Endothelial cell of umbilical vein (primary cell): ENCODE measurements at regions of chr11 and their contacts with region 1.

Region 1: DNA sequence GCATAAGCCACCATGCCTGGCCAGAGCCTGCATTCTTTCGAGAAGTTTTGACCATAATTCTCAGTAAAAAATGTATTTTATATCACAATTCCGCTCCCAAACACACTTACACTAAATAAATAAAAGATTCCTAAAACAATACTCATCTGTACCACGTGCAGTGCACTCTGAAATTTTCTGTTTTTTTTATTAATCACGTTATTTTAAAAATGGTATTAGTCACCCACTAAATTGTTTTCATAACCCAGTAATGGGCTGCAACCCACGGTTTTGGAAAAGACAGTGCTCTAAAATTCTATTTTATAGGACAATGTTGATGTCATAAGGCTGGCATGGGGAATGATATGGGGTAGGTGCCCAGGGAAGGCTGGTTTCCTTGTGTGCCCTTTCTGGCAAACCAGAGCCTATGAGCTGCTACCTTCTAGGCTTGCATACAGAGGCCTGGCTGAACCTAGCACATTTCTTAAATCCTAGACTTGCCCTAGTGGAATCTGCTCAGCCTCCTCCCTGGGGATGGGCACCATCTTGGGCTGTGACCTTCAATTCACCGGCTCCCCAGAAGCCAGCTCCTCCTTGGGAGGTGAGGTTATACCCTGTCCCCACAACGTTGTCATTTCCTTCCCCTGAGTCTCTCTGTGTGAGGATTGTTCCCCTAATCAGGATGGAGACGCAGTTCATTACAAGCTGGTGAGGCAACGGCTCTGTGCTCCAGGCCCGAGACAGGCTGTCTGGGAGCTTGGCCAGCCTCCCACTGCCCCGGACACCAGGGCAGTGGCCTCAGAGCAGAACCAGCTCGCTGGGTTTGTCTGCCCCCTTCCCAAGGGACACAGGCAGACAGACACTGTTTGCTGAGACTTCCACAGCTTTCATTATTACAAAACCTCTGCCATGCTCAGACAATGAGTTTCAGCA is 116.5 kb upstream of the NAV2 start:
- DNase-seq: peak; percentile 91
- H3K4me3 ChIP-seq: no peak overlapping the region
- H3K27ac ChIP-seq: peak overlapping the region; percentile 95
- H3K4me1 ChIP-seq: peaks cover 34% of the 10 kb centered on the region
- H3K27me3 ChIP-seq: no peaks in the 10 kb centered on the region
- CTCF ChIP-seq: no peak
- POLR2A ChIP-seq: no peak

Region 2: GRCh38 chr11:19344751-19345518 is 251.2 kb before region 1 on chr11:
- CTCF ChIA-PET with region 1: no interaction called
- POLR2A ChIA-PET with region 1: no interaction called
- dilution Hi-C with region 1: no loop called
- intact Hi-C with region 1: no loop called
- DNase-seq: peak; percentile 43
- H3K4me3 ChIP-seq: peak overlapping the region in 2 of 3 experiments; percentile 32 to 58
- H3K27ac ChIP-seq: no peak overlapping the region
- H3K4me1 ChIP-seq: peaks cover 12% of the 10 kb centered on the region
- H3K27me3 ChIP-seq: peaks cover 23 to 36% of the 10 kb centered on the region in 2 experiments
- CTCF ChIP-seq: no peak
- POLR2A ChIP-seq: no peak

Region 3: GRCh38 chr11:19524161-19524671 is 71.9 kb before region 1 on chr11:
- CTCF ChIA-PET with region 1: no interaction called
- POLR2A ChIA-PET with region 1: no interaction called
- dilution Hi-C with region 1: no loop called
- intact Hi-C with region 1: no loop called
- DNase-seq: no peak
- H3K4me3 ChIP-seq: no peak overlapping the region
- H3K27ac ChIP-seq: no peak overlapping the region
- H3K4me1 ChIP-seq: no peaks in the 10 kb centered on the region
- H3K27me3 ChIP-seq: peaks cover 0 to 2% of the 10 kb centered on the region in 2 experiments
- CTCF ChIP-seq: no peak
- POLR2A ChIP-seq: no peak

Region 4: GRCh38 chr11:19577976-19578619 is 18.0 kb before region 1 on chr11:
- CTCF ChIA-PET with region 1: no interaction called
- POLR2A ChIA-PET with region 1: interaction called, 7 read pairs
- dilution Hi-C with region 1: no loop called
- intact Hi-C with region 1: loop called (anchors 1 kb)
- DNase-seq: peak; percentile 86
- H3K4me3 ChIP-seq: peak overlapping the region in 1 of 3 experiments; percentile 25
- H3K27ac ChIP-seq: peak overlapping the region; percentile 78
- H3K4me1 ChIP-seq: peaks cover 25% of the 10 kb centered on the region
- H3K27me3 ChIP-seq: no peaks in the 10 kb centered on the region
- CTCF ChIP-seq: no peak
- POLR2A ChIP-seq: no peak

Region 5: DNA sequence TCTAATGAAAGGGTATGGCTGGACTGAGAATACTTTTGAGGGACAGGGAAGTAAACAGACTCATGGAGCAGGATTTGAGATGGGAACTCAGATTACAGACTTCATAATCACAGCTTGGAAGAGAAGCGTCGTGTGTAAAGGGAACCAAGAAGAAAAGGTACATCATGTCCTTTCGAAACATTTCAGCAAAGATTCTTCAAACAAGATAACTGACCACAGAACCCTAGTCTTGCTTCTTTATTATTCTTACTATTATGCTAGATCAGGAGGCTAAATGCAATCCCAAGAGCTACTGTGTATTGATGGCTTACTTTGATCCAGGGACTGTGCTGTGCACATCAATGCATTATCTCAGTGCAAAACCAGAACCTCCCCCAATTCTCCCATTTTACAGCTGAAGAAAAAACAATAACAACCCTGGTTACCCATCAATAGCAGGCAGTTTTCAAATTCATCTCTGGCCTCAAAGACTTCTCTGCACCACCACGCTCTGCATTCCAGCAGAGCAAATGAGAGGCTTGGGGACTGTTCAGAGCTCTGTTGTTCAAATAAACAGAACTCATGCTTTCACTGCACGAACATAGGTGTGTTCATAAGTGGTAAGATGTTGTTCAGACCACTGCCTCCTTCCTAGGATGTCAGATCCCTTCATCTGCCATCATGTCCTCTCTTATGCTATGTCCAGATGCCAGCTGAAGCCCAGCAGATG is 11.7 kb after region 1 on chr11:
- CTCF ChIA-PET with region 1: interaction called, 10 read pairs
- POLR2A ChIA-PET with region 1: no interaction called
- dilution Hi-C with region 1: no loop called
- intact Hi-C with region 1: no loop called
- DNase-seq: no peak
- H3K4me3 ChIP-seq: no peak overlapping the region
- H3K27ac ChIP-seq: no peak overlapping the region
- H3K4me1 ChIP-seq: peaks cover 8% of the 10 kb centered on the region
- H3K27me3 ChIP-seq: no peaks in the 10 kb centered on the region
- CTCF ChIP-seq: no peak
- POLR2A ChIP-seq: no peak

Region 6: GRCh38 chr11:19614370-19614940 is 18.4 kb after region 1 on chr11:
- CTCF ChIA-PET with region 1: interaction called, 5 read pairs
- POLR2A ChIA-PET with region 1: no interaction called
- dilution Hi-C with region 1: no loop called
- intact Hi-C with region 1: loop called (anchors 2 kb)
- DNase-seq: peak; percentile 32
- H3K4me3 ChIP-seq: no peak overlapping the region
- H3K27ac ChIP-seq: no peak overlapping the region
- H3K4me1 ChIP-seq: peaks cover 19% of the 10 kb centered on the region
- H3K27me3 ChIP-seq: no peaks in the 10 kb centered on the region
- CTCF ChIP-seq: no peak
- POLR2A ChIP-seq: no peak

Region 7: GRCh38 chr11:19658344-19658743 is 62.2 kb after region 1 on chr11:
- CTCF ChIA-PET with region 1: interaction called, 11 read pairs
- POLR2A ChIA-PET with region 1: no interaction called
- dilution Hi-C with region 1: no loop called
- intact Hi-C with region 1: no loop called
- DNase-seq: no peak
- H3K4me3 ChIP-seq: no peak overlapping the region
- H3K27ac ChIP-seq: no peak overlapping the region
- H3K4me1 ChIP-seq: peaks cover 9% of the 10 kb centered on the region
- H3K27me3 ChIP-seq: no peaks in the 10 kb centered on the region
- CTCF ChIP-seq: peak; percentile 10 to 35
- POLR2A ChIP-seq: no peak

Region 8: GRCh38 chr11:19679952-19680828 is 84.1 kb after region 1 on chr11:
- CTCF ChIA-PET with region 1: interaction called, 4 read pairs
- POLR2A ChIA-PET with region 1: no interaction called
- dilution Hi-C with region 1: no loop called
- intact Hi-C with region 1: loop called (anchors 1 kb)
- DNase-seq: peak; percentile 98
- H3K4me3 ChIP-seq: no peak overlapping the region
- H3K27ac ChIP-seq: peak overlapping the region; percentile 99
- H3K4me1 ChIP-seq: peaks cover 49% of the 10 kb centered on the region
- H3K27me3 ChIP-seq: no peaks in the 10 kb centered on the region
- CTCF ChIP-seq: no peak
- POLR2A ChIP-seq: no peak

Region 9: DNA sequence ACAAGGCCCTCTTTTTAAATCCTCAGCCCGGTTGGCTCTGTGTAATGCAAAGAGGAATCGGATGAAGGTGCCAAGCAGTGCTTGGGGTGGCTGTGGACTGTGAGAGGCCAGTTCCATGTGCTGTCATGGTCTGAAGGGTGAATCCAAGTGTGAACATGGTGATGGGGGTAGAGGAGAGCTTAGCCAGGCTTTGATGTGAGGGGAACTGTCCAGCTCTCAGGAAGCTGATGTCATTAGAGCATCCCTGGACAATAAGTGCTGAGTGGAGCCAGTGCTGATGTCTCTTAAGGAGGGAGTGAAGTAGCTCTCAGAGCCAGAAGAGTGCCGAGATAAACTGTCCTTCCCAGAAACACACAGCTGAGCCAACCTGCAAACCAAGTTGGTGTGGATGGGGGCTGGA is 170.1 kb after region 1 on chr11:
- CTCF ChIA-PET with region 1: no interaction called
- POLR2A ChIA-PET with region 1: no interaction called
- dilution Hi-C with region 1: no loop called
- intact Hi-C with region 1: no loop called
- DNase-seq: no peak
- H3K4me3 ChIP-seq: no peak overlapping the region
- H3K27ac ChIP-seq: no peak overlapping the region
- H3K4me1 ChIP-seq: peaks cover 4% of the 10 kb centered on the region
- H3K27me3 ChIP-seq: no peaks in the 10 kb centered on the region
- CTCF ChIP-seq: no peak
- POLR2A ChIP-seq: no peak